Activated B cell treated with CpG ODN at 0.5 μM for 24 hours (primary cell): ENCODE measurements at regions of chr2 and their contacts with region 1.

Region 1: GRCh38 chr2:171703574-171704347 is 16.5 kb downstream of the DYNC1I2 start:
- DNase-seq: no peak
- ATAC-seq: no peak
- H3K4me3 Mint-ChIP-seq: no peak overlapping the region
- H3K27ac Mint-ChIP-seq: no peak overlapping the region
- H3K4me1 Mint-ChIP-seq: peaks cover 18% of the 10 kb centered on the region
- H3K27me3 Mint-ChIP-seq: no peaks in the 10 kb centered on the region
- CTCF ChIP-seq: no peak

Region 2: DNA sequence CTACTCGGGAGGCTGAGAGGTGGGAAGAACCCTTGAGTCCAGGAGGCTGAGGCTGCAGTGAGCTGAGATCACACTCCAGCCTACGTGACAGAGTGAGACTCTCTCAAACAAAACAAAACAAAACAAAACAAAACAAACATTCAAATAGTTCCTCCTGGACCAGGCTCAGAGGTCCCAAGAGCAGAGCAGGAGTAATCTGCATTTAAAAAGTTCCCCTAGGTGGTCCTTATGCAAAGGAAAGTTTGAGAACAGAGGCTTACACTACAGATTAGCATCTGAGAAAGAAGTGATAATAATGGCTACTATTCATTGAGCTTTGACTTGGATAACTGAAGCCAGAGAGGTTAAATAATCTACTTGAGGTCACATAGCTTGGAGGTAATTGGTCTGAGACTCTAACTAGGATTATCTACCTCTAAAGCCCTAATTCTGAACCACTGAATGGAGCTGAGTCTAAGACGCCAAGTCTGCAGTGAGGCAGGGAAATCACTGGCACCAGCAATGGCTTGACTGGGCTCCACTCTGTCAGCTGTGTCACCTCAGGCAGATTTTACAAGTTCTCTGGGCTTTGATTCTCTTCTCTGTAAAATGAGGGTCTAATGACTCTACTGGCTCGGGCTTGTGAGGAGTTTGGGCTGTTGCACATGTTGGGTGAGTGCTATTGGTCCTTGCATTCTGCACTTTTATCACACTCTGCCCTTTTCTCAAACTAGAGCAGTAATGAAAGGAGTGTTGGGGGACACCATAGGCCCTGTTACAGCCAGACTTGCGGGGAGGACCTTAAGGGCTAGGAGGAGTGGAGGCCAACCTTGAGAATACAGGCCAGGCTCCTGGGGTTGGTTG is 428.2 kb after region 1 on chr2:
- CTCF ChIA-PET with region 1: interaction called, 7 read pairs
- POLR2A ChIA-PET with region 1: no interaction called
- intact Hi-C with region 1: loop called (anchors 1 kb)
- DNase-seq: no peak
- ATAC-seq: no peak
- H3K4me3 Mint-ChIP-seq: no peak overlapping the region
- H3K27ac Mint-ChIP-seq: no peak overlapping the region
- H3K4me1 Mint-ChIP-seq: no peaks in the 10 kb centered on the region
- H3K27me3 Mint-ChIP-seq: peaks cover 12% of the 10 kb centered on the region
- CTCF ChIP-seq: no peak